ENCODE measurements at regions of chr12 and their contacts with region 1.

Region 1: GRCh38 chr12:57836442-57837375 is 9.8 kb downstream of the CTDSP2 start:
- DNase-seq: peak; percentile 81
- H3K4me3 Mint-ChIP-seq: peak overlapping the region; percentile 40
- H3K27ac Mint-ChIP-seq: peak overlapping the region; percentile 89
- H3K4me1 Mint-ChIP-seq: peaks cover 97% of the 10 kb centered on the region
- H3K27me3 Mint-ChIP-seq: no peaks in the 10 kb centered on the region

Region 2: DNA sequence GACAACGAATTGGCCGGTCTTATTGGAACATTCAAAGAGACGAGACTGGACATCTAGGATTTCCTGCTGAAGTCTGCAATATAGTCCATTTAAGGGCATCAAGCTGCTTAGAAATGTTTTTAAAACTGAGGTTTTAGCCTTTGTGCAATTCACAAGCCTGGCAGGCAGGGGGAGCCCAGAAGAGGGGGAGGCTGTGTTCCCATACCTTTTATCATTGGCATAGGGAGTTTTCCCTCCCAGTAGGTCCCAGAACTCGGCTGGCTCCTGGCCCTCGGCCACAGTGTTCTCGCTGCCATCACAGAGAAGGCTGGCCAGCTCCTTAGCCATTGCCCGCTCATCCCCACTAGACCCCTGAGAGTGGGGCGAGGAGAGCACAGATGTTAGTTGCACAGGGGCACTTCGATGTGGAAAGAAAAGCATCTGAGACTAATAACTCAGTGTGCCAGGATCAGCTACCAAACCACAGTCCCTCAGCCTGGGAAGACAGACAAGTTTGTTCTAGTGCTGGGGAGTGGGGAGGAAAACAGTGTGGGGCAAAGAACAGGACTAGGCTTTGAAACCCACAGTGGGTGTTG is 33.3 kb before region 1 on chr12:
- CTCF ChIA-PET with region 1: interaction called, 11 read pairs
- intact Hi-C with region 1: loop called (anchors 1 kb)
- DNase-seq: peak; percentile 51
- H3K4me3 Mint-ChIP-seq: no peak overlapping the region
- H3K27ac Mint-ChIP-seq: no peak overlapping the region
- H3K4me1 Mint-ChIP-seq: no peaks in the 10 kb centered on the region
- H3K27me3 Mint-ChIP-seq: no peaks in the 10 kb centered on the region

Region 3: GRCh38 chr12:57941165-57941894 is 104.6 kb after region 1 on chr12 and contains the start of gene ATP23:
- CTCF ChIA-PET with region 1: no interaction called
- intact Hi-C with region 1: loop called (anchors 1 kb)
- DNase-seq: peak; percentile 90
- H3K4me3 Mint-ChIP-seq: peak within 1 kb of the TSS; percentile 94
- H3K27ac Mint-ChIP-seq: peak within 1 kb of the TSS; percentile 96
- H3K4me1 Mint-ChIP-seq: peaks cover 38% of the 10 kb centered on the region
- H3K27me3 Mint-ChIP-seq: no peaks in the 10 kb centered on the region
- total RNA-seq, gene ATP23: 11.3 to 11.9 TPM

Measured in activated naive CD4-positive, alpha-beta T cell treated with anti-CD3 and anti-CD28 coated beads for 36 hours (primary cell).